OCI-LY7 (cell line): ENCODE measurements at regions of chr10 and their contacts with region 1.

Region 1: DNA sequence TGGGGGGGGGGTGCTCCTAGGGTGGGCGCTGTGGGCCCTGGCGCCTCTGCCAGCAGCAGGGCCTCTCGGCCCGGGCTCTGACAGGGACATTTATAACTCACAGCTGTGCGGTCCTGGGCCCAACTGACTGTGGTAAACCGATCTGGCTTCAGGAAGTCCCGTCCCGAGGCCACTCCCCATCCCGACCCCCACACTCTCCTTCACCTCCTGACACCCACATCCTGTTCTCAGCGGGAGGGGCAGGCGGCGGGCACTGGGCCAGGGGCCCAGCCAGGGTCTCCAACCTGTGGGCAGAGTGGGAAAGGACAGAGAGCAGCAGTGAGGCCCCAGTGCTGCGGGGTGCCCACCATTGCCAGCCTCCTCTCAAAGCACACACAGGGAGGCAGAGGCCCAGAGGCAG is 69.1 kb downstream of the ZMIZ1 start:
- DNase-seq: peak; percentile 85
- H3K4me3 ChIP-seq: peak overlapping the region; percentile 67
- H3K27ac ChIP-seq: peak overlapping the region; percentile 75
- H3K4me1 ChIP-seq: peaks cover 61% of the 10 kb centered on the region
- CTCF ChIP-seq: no peak

Region 2: DNA sequence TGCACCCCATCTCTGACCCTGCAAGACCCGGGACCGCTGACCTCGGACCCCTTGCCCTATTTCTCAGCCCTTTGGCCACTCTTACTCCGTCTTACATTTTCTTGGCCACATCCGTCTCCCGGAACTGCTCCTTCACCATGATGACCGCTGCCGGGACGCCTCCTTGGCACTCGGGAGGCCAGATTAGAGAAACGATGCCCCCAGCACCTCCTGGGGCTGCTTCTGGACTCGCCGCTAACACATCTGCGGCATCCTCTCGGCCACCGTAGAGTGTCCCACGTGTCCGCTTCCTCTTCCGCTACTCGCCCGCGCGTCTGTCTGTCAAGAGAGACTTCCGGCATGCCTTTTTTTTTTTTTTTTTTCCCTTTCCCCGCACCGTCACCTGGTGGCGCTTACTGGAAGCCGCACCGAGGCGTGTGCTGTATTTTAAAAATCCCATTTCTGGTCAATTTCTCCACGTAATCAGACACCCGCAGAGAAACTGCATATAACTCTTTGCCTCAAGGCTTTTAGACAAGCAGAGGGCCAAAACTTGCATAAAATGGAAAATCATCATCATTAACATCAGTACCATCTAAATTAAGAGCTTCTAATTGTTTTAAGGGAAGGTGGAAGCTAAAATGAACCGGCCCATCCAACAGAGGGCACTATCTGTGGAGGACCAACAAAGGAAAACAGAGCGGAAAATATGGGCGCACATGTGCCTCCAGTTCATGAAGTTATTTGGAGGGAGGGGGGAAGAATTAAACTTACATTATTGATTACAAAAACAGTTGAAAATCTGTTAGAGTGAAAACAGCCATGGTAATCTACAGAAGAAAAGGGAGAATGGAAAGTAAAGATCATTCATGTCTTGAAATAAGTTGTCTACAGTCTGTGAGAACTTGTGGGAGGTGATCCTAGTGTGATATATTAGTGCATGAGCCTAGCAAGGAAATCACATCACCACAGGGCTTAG is 1108.3 kb before region 1 on chr10 and contains the start of gene POLR3A:
- CTCF ChIA-PET with region 1: no interaction called
- POLR2A ChIA-PET with region 1: no interaction called
- intact Hi-C with region 1: loop called (anchors 5 kb)
- DNase-seq: peak; percentile 96
- H3K4me3 ChIP-seq: peak within 1 kb of the TSS; percentile 99
- H3K27ac ChIP-seq: peak within 1 kb of the TSS; percentile 70
- H3K4me1 ChIP-seq: peaks cover 19% of the 10 kb centered on the region
- CTCF ChIP-seq: peak; percentile 99
- total RNA-seq, gene POLR3A: 11.6 and 16.3 TPM in 2 replicates

Region 3: GRCh38 chr10:79059859-79060379 is 77.9 kb before region 1 on chr10:
- CTCF ChIA-PET with region 1: no interaction called
- POLR2A ChIA-PET with region 1: no interaction called
- intact Hi-C with region 1: no loop called
- DNase-seq: no peak
- H3K4me3 ChIP-seq: no peak overlapping the region
- H3K27ac ChIP-seq: no peak overlapping the region
- H3K4me1 ChIP-seq: no peaks in the 10 kb centered on the region
- CTCF ChIP-seq: no peak

Region 4: GRCh38 chr10:79101560-79102497 is 36.0 kb before region 1 on chr10:
- CTCF ChIA-PET with region 1: interaction called, 8 read pairs
- POLR2A ChIA-PET with region 1: interaction called, 11 read pairs
- intact Hi-C with region 1: loop called (anchors 2 kb)
- DNase-seq: peak; percentile 57
- H3K4me3 ChIP-seq: peak overlapping the region; percentile 27
- H3K27ac ChIP-seq: peak overlapping the region; percentile 46
- H3K4me1 ChIP-seq: peaks cover 78% of the 10 kb centered on the region
- CTCF ChIP-seq: no peak

Region 5: GRCh38 chr10:79242620-79243152 is 104.9 kb after region 1 on chr10:
- CTCF ChIA-PET with region 1: no interaction called
- POLR2A ChIA-PET with region 1: no interaction called
- intact Hi-C with region 1: loop called (anchors 5 kb)
- DNase-seq: peak; percentile 78
- H3K4me3 ChIP-seq: peak overlapping the region; percentile 76
- H3K27ac ChIP-seq: peak overlapping the region; percentile 90
- H3K4me1 ChIP-seq: peaks cover 49% of the 10 kb centered on the region
- CTCF ChIP-seq: no peak